Naive thymus-derived CD4-positive, alpha-beta T cell (primary cell): ENCODE measurements at regions of chr19 and their contacts with region 1.

Region 1: GRCh38 chr19:13846557-13847406 is 30.2 kb upstream of the NANOS3 start:
- DNase-seq: peak; percentile 91 to 98 (median 97)
- ATAC-seq: peak; percentile 75
- H3K4me3 ChIP-seq: peak overlapping the region; percentile 72
- H3K4me3 Mint-ChIP-seq: peak overlapping the region; percentile 82 to 96 (median 90)
- H3K27ac ChIP-seq: peak overlapping the region; percentile 95
- H3K27ac Mint-ChIP-seq: peak overlapping the region; percentile 99 to 100 (median 100)
- H3K4me1 ChIP-seq: peaks cover 47 to 55% of the 10 kb centered on the region in 2 donors
- H3K4me1 Mint-ChIP-seq: peaks cover 19 to 62% (median 55%) of the 10 kb centered on the region in 7 donors
- H3K27me3 ChIP-seq: no peaks in the 10 kb centered on the region
- H3K27me3 Mint-ChIP-seq: peaks cover 0 to 3% (median 0%) of the 10 kb centered on the region in 5 donors

Region 2: DNA sequence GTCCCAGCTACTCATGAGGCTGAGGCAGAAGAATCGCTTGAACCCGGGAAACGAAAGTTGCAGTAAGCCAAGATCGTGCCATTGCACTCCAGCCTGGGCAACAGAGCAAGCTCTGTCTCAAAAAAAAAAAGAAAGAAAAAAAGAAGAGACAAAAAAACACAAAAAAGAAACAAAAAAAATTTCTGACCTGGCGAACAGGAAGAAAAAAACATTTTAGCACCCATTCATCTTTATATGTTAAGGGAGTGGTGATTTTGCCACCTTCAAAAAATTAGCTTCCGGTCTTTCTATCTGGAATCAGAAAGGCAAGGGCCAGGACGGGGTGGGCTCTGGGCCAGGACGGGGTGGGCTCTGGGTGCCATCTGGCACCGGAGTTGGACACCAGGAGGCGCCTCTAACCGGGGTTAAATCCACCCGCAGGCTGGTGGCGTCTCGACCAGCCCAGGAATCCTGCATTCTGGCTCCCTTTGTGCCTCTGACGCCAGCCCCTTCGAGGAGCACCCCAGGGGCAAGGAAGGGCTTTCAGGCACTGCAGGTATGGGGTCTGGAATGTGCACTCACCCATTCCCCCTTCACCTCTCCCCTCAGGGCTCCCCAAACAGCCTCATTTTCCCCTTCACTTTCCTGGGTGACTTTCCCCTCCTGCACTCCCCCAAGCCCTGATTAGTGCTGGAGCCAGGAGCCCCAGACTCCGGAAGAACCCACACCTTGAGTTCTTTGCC is 61.9 kb before region 1 on chr19:
- CTCF ChIA-PET with region 1: interaction called, 9 read pairs
- POLR2A ChIA-PET with region 1: interaction called, 13 read pairs
- intact Hi-C with region 1: loop called in 1 of 2 experiments (anchors 1 kb)
- DNase-seq: peak; percentile 51 to 73 (median 63)
- ATAC-seq: peak; percentile 87
- H3K4me3 ChIP-seq: no peak overlapping the region
- H3K4me3 Mint-ChIP-seq: peak overlapping the region; percentile 51 to 72 (median 68)
- H3K27ac ChIP-seq: no peak overlapping the region
- H3K27ac Mint-ChIP-seq: peak overlapping the region; percentile 58 to 90 (median 80)
- H3K4me1 ChIP-seq: peaks cover 28 to 32% of the 10 kb centered on the region in 2 donors
- H3K4me1 Mint-ChIP-seq: peaks cover 7 to 46% (median 32%) of the 10 kb centered on the region in 7 donors
- H3K27me3 ChIP-seq: no peaks in the 10 kb centered on the region
- H3K27me3 Mint-ChIP-seq: no peaks in the 10 kb centered on the region

Region 3: DNA sequence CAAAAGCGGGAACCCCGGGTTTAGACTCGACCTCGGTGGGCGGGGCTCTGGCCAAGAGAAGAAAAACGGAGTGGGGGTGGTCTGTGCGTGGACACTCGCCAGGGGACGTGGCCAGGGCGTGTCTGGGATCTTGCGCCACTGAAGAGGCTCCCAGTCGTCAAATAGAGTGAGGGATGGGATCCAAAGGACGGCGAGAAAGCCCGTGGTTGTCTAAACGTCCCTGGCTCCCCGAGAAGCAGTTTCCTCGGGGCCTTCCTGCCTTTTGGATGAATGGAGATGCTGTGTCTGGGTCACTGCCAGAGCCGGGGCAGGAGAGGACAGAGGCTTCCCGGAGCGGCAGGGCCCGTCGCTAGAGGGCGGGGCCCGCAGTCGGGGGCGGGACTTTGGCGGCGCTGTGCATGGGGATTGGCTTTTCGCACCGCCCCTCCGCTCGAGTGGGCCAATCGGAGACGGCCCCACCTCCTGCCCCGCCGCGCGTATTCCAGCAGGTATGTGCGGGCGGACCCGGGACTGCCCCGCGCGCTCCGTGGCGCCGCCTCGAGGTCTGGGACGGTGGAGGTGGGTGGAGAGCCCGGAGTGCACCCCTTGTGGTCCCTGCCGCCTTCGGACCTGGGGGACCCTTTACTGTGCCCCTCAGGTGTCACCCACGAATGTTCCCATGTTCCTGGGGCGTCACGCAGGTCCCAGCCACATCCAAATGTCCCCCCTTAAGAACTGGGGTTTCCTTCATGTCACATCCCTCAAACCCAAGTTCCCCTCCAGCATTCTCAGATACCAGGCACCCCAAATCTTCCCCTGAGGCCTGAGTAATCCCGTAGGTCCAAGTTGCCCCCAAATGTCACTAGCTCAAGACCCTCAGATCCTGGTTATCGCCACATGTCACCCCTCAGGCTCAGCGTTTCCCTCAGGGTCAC is 13.2 kb before region 1 on chr19:
- CTCF ChIA-PET with region 1: interaction called, 9 read pairs
- POLR2A ChIA-PET with region 1: interaction called, 14 read pairs
- intact Hi-C with region 1: loop called (anchors 1 to 2 kb)
- DNase-seq: peak; percentile 88 to 97 (median 92)
- ATAC-seq: peak; percentile 69
- H3K4me3 ChIP-seq: peak overlapping the region; percentile 70
- H3K4me3 Mint-ChIP-seq: peak overlapping the region; percentile 79 to 93 (median 88)
- H3K27ac ChIP-seq: peak overlapping the region; percentile 85
- H3K27ac Mint-ChIP-seq: peak overlapping the region; percentile 88 to 97 (median 91)
- H3K4me1 ChIP-seq: peaks cover 31 to 41% of the 10 kb centered on the region in 2 donors
- H3K4me1 Mint-ChIP-seq: peaks cover 15 to 41% (median 36%) of the 10 kb centered on the region in 7 donors
- H3K27me3 ChIP-seq: no peaks in the 10 kb centered on the region
- H3K27me3 Mint-ChIP-seq: no peaks in the 10 kb centered on the region

Region 4: GRCh38 chr19:13880059-13881043 is 33.6 kb after region 1 on chr19:
- CTCF ChIA-PET with region 1: no interaction called
- POLR2A ChIA-PET with region 1: no interaction called
- intact Hi-C with region 1: no loop called
- DNase-seq: peak; percentile 89 to 99 (median 93)
- ATAC-seq: peak; percentile 99
- H3K4me3 ChIP-seq: peak overlapping the region; percentile 49
- H3K4me3 Mint-ChIP-seq: peak overlapping the region; percentile 49 to 89 (median 66)
- H3K27ac ChIP-seq: peak overlapping the region; percentile 48
- H3K27ac Mint-ChIP-seq: peak overlapping the region in 8 of 9 donors; percentile 12 to 86 (median 70)
- H3K4me1 ChIP-seq: peaks cover 36 to 38% of the 10 kb centered on the region in 2 donors
- H3K4me1 Mint-ChIP-seq: peaks cover 6 to 43% (median 34%) of the 10 kb centered on the region in 7 donors
- H3K27me3 ChIP-seq: no peaks in the 10 kb centered on the region
- H3K27me3 Mint-ChIP-seq: no peaks in the 10 kb centered on the region

Region 5: DNA sequence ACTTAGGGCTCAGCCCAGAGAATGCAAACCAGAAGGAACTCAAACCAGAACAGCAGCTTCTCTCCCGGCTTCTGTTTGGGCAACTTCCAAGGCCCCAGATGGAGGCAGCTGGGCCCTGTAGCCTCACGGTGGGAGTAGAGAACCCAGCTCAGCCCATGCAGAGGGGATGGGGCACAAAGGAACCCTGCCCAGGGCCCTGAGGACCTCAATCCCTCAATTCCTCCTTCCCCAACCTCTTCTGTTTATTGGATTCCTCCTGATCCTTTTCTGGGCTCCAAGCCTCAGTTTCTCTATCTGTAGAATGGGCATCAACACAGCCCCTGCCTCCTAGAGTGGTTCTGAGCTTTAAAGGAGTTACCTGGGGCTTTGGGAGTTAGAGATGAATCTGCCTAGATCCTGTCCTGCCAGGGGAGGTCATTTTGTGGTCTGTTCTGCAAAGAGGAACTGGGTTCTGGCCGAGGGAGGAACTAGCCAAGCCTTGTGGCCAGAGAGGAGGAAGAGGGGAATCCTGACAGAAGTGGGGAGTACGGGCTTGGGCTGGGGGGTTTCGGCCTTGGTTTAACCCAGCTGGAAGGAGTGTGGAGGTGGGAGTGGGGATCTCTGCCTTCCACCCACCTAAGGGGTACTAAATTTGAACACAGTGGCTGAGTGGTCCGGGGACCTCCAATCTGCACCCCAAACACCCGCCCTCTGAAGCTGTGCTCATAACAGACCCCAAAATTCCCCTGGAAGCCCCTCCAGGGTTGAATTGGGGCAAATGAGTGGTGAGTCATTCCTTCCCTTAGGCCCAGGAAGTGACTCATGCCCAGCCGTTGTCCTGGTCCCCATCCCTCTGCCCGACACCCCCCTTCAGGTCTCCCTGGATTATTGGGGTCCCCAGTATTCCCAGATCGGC is 537.1 kb after region 1 on chr19:
- CTCF ChIA-PET with region 1: no interaction called
- POLR2A ChIA-PET with region 1: no interaction called
- intact Hi-C with region 1: loop called (anchors 5 kb)
- DNase-seq: peak in 2 of 9 donors; percentile 69 to 81
- ATAC-seq: peak; percentile 4
- H3K4me3 ChIP-seq: peak overlapping the region; percentile 95
- H3K4me3 Mint-ChIP-seq: peak overlapping the region; percentile 89 to 100 (median 94)
- H3K27ac ChIP-seq: peak overlapping the region; percentile 98
- H3K27ac Mint-ChIP-seq: peak overlapping the region; percentile 96 to 99 (median 97)
- H3K4me1 ChIP-seq: peaks cover 24 to 28% of the 10 kb centered on the region in 2 donors
- H3K4me1 Mint-ChIP-seq: peaks cover 36 to 51% (median 47%) of the 10 kb centered on the region in 7 donors
- H3K27me3 ChIP-seq: no peaks in the 10 kb centered on the region
- H3K27me3 Mint-ChIP-seq: peaks cover 0 to 3% (median 0%) of the 10 kb centered on the region in 5 donors